RWPE1 (cell line): ENCODE measurements at regions of chr20 and their contacts with region 1.

Region 1: DNA sequence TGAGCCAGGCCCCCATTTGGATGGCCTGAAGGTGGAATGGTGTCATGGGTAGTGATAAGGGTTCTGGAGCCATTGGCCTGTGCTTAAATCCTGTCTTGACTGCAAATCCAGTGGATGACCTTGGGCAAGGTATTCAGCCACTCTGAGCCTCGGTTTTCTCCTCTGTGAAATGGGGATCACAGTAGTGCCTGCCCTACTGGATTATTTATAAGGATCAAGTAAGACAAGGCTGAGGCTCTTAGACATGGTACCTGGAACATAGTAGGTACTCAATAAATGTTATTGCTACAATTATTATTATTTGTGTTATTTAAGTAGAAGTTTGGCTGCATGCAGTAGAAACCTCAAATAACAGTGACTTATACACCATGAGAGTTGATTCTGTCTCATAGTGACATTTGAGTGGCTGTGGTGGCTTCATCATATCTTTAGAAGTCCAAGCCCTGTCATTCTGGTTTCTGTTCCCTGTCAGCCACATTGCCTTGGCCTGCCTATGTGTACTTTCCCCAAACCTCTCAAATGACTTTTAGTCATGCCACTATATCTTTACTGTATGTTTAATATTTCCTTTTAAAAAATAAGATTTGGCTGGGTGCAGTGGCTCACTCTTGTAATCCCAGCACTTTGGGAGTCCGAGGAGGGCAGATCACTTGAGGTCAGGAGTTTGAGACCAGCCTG is 37.6 kb upstream of the CHMP4B start:
- DNase-seq: no peak
- H3K27ac ChIP-seq: no peak overlapping the region
- CTCF ChIP-seq: no peak

Region 2: GRCh38 chr20:34037121-34037520 is 263.6 kb after region 1 on chr20:
- CTCF ChIA-PET with region 1: interaction called, 11 read pairs
- POLR2A ChIA-PET with region 1: no interaction called
- DNase-seq: no peak
- H3K27ac ChIP-seq: no peak overlapping the region
- CTCF ChIP-seq: no peak